ENCODE measurements at regions of chr6 and their contacts with region 1.

Region 1: GRCh38 chr6:55953335-55953734 is 77.9 kb upstream of the BMP5 start:
- DNase-seq: peak; percentile 76
- ATAC-seq: peak; percentile 92
- H3K4me3 ChIP-seq: peak overlapping the region; percentile 36; the same call in 1 of the 2 replicates
- H3K27ac ChIP-seq: no peak overlapping the region
- H3K4me1 ChIP-seq: no peaks in the 10 kb centered on the region
- H3K27me3 ChIP-seq: no peaks in the 10 kb centered on the region
- CTCF ChIP-seq: peak; percentile 80

Region 2: GRCh38 chr6:55276745-55277530 is 676.4 kb before region 1 on chr6:
- CTCF ChIA-PET with region 1: interaction called, 3 read pairs
- POLR2A ChIA-PET with region 1: no interaction called
- intact Hi-C with region 1: loop called (anchors 1 kb)
- DNase-seq: peak; percentile 73
- ATAC-seq: peak; percentile 46; the same call in 1 of the 2 replicates
- H3K4me3 ChIP-seq: no peak overlapping the region
- H3K27ac ChIP-seq: no peak overlapping the region
- H3K4me1 ChIP-seq: no peaks in the 10 kb centered on the region
- H3K27me3 ChIP-seq: peaks cover 58% of the 10 kb centered on the region
- CTCF ChIP-seq: peak; percentile 79

Region 3: GRCh38 chr6:56004426-56004825 is 51.1 kb after region 1 on chr6:
- CTCF ChIA-PET with region 1: no interaction called
- POLR2A ChIA-PET with region 1: no interaction called
- intact Hi-C with region 1: no loop called
- DNase-seq: peak; percentile 67
- ATAC-seq: no peak
- H3K4me3 ChIP-seq: no peak overlapping the region
- H3K27ac ChIP-seq: no peak overlapping the region
- H3K4me1 ChIP-seq: peaks cover 5% of the 10 kb centered on the region; the same call in 1 of the 2 replicates
- H3K27me3 ChIP-seq: no peaks in the 10 kb centered on the region
- CTCF ChIP-seq: no peak

Region 4: DNA sequence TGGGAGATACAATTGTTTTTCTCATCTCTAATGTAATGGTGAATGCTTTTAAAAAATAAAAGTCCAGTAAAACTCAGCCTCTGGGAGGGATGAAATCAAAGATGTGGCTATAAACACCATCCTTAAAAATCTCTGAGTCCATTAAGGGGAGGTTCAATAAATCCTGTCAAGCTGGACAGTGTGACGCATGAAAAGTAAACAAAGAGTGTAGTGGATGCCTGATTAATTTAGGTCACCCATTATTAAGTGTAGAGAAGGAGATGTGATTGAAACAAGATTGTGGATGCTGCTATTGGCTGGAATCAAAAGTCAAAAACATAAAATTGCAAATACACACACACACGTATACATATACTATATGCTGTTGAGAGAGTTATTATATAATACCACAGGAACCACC is 178.1 kb after region 1 on chr6:
- CTCF ChIA-PET with region 1: no interaction called
- POLR2A ChIA-PET with region 1: no interaction called
- intact Hi-C with region 1: no loop called
- DNase-seq: peak; percentile 22
- ATAC-seq: no peak
- H3K4me3 ChIP-seq: no peak overlapping the region
- H3K27ac ChIP-seq: no peak overlapping the region
- H3K4me1 ChIP-seq: no peaks in the 10 kb centered on the region
- H3K27me3 ChIP-seq: no peaks in the 10 kb centered on the region
- CTCF ChIP-seq: no peak